H1 (cell line): ENCODE measurements at regions of chr2 and their contacts with region 1.

Region 1: GRCh38 chr2:2121887-2122286 is 209.2 kb downstream of the MYT1L start:
- DNase-seq: no peak
- H3K4me3 ChIP-seq: no peak overlapping the region
- H3K27ac ChIP-seq: no peak overlapping the region
- H3K4me1 ChIP-seq: peaks cover 0 to 8% (median 2%) of the 10 kb centered on the region in 4 experiments; a peak in 3 of 7 replicates
- H3K27me3 ChIP-seq: no peaks in the 10 kb centered on the region
- CTCF ChIP-seq: no peak
- EP300 ChIP-seq: no peak
- POLR2A ChIP-seq: no peak
- RAD21 ChIP-seq: no peak

Region 2: GRCh38 chr2:1972422-1972821 is 149.5 kb before region 1 on chr2:
- CTCF ChIA-PET with region 1: no interaction called
- POLR2A ChIA-PET with region 1: no interaction called
- DNase-seq: peak in 1 of 2 experiments; percentile 41
- H3K4me3 ChIP-seq: no peak overlapping the region
- H3K27ac ChIP-seq: no peak overlapping the region
- H3K4me1 ChIP-seq: peaks cover 0 to 18% (median 7%) of the 10 kb centered on the region in 4 experiments; a peak in 5 of 7 replicates
- H3K27me3 ChIP-seq: no peaks in the 10 kb centered on the region
- CTCF ChIP-seq: no peak
- EP300 ChIP-seq: no peak
- POLR2A ChIP-seq: no peak
- RAD21 ChIP-seq: no peak

Region 3: GRCh38 chr2:2107141-2107540 is 14.7 kb before region 1 on chr2:
- CTCF ChIA-PET with region 1: interaction called, 35 read pairs
- POLR2A ChIA-PET with region 1: no interaction called
- DNase-seq: no peak
- H3K4me3 ChIP-seq: no peak overlapping the region
- H3K27ac ChIP-seq: no peak overlapping the region
- H3K4me1 ChIP-seq: no peaks in the 10 kb centered on the region
- H3K27me3 ChIP-seq: no peaks in the 10 kb centered on the region; a peak in 1 of 7 replicates
- CTCF ChIP-seq: no peak
- EP300 ChIP-seq: no peak
- POLR2A ChIP-seq: no peak
- RAD21 ChIP-seq: no peak